Panc1 (cell line): ENCODE measurements at regions of chr22 and their contacts with region 1.

Region 1: GRCh38 chr22:38141217-38141973 is 30.9 kb upstream of the BAIAP2L2 start:
- DNase-seq: no peak
- ATAC-seq: no peak
- H3K4me3 ChIP-seq: no peak overlapping the region
- H3K27ac ChIP-seq: no peak overlapping the region
- H3K4me1 ChIP-seq: no peaks in the 10 kb centered on the region
- H3K27me3 ChIP-seq: no peaks in the 10 kb centered on the region
- CTCF ChIP-seq: no peak

Region 2: GRCh38 chr22:38207898-38208432 is 66.6 kb after region 1 on chr22:
- CTCF ChIA-PET with region 1: no interaction called
- POLR2A ChIA-PET with region 1: interaction called, 11 read pairs
- in situ Hi-C with region 1: no loop called
- intact Hi-C with region 1: no loop called
- DNase-seq: no peak
- ATAC-seq: no peak
- H3K4me3 ChIP-seq: no peak overlapping the region
- H3K27ac ChIP-seq: no peak overlapping the region
- H3K4me1 ChIP-seq: no peaks in the 10 kb centered on the region; the same call in 1 of the 2 replicates
- H3K27me3 ChIP-seq: no peaks in the 10 kb centered on the region
- CTCF ChIP-seq: no peak